ENCODE measurements at regions of chr14 and their contacts with region 1.

Region 1: GRCh38 chr14:39432179-39432618 is at the start of gene FBXO33:
- DNase-seq: peak; percentile 98
- ATAC-seq: peak; percentile 87
- H3K4me3 Mint-ChIP-seq: peak within 1 kb of the TSS; percentile 92
- H3K27ac Mint-ChIP-seq: peak within 1 kb of the TSS; percentile 100
- H3K4me1 Mint-ChIP-seq: peaks cover 37% of the 10 kb centered on the region
- H3K27me3 Mint-ChIP-seq: no peaks in the 10 kb centered on the region
- total RNA-seq, gene FBXO33: 12.5 to 14.0 TPM

Region 2: GRCh38 chr14:38762426-38762825 is 669.8 kb before region 1 on chr14:
- CTCF ChIA-PET with region 1: no interaction called
- POLR2A ChIA-PET with region 1: no interaction called
- intact Hi-C with region 1: no loop called
- DNase-seq: no peak
- ATAC-seq: no peak
- H3K4me3 Mint-ChIP-seq: no peak overlapping the region
- H3K27ac Mint-ChIP-seq: no peak overlapping the region
- H3K4me1 Mint-ChIP-seq: no peaks in the 10 kb centered on the region
- H3K27me3 Mint-ChIP-seq: no peaks in the 10 kb centered on the region

Region 3: DNA sequence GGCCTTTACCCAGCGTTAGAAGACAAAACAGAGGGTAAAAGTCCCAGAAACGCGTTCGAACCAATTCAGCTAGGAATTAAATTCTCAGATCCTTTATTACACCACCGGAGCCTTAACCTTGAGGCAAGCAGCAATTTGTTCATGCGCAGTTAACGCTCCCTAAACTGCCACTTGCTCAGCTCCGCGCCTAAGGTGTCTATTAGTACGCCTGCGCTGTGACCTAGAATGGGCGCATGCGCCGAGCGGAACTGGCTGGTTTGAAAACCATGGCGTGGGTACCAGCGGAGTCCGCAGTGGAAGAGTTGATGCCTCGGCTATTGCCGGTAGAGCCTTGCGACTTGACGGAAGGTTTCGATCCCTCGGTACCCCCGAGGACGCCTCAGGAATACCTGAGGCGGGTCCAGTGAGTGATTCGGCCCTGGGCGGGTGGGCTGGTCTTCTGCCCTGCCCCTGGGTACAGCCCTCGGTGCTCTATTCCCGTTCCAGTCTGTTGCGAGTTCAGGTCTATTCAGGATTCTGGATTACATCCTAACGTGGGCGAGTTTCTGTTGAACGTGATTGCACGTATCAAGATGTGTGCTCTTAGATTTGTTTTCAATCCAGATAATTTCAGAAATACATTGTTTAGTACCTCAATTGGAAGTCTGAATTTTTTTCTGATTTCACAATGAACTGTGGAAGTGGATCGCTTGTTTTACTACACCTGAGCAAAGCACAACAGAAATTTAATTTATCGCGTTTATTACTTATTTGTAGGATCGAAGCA is 317.9 kb before region 1 on chr14 and contains the start of gene GEMIN2:
- CTCF ChIA-PET with region 1: interaction called, 4 read pairs
- POLR2A ChIA-PET with region 1: interaction called, 5 read pairs
- intact Hi-C with region 1: loop called in 1 of 2 experiments (anchors 1 kb)
- DNase-seq: peak; percentile 97
- ATAC-seq: peak; percentile 99
- H3K4me3 Mint-ChIP-seq: peak within 1 kb of the TSS; percentile 95
- H3K27ac Mint-ChIP-seq: peak within 1 kb of the TSS; percentile 94
- H3K4me1 Mint-ChIP-seq: peaks cover 19% of the 10 kb centered on the region
- H3K27me3 Mint-ChIP-seq: no peaks in the 10 kb centered on the region
- total RNA-seq, gene GEMIN2: 23.8 to 27.6 TPM

Region 4: DNA sequence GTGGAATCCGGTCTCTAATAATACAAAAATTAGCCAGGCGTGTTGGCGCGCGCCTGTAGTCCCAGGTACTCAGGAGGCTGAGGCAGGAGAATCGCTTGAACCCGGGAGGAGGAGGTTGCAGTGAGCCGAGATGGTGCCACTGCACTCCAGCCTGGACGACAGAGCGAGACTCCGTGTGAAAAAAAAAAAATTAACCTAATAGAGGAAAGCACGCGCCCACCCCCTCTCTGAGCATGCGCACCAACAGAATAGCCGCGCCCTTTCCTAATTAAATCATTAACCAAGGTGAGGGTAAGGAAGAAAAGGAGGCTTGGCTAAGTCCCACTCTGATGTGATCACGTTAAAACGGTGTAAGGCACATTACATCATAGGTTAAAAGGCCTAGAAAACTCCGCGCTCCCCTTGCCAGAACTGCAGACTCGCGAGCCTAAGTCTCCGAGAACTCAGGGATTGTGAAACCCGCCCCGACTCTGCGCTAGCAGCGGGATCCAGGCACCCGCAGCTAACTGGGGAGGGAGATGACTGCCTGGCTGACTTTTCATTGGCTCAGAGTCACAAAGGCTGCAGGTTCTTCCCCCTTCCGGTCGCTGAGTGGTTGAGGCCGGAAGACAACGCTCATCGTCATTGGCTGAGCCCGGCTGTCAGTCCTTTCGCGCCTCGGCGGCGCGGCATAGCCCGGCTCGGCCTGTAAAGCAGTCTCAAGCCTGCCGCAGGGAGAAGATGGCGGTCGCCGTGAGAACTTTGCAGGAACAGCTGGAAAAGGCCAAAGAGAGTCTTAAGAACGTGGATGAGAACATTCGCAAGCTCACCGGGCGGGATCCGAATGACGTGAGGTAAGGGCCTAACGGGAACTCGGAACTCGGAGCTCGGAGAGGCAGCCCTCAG is 257.4 kb before region 1 on chr14 and contains the start of gene PNN:
- CTCF ChIA-PET with region 1: interaction called, 3 read pairs
- POLR2A ChIA-PET with region 1: interaction called, 18 read pairs
- intact Hi-C with region 1: loop called (anchors 1 to 2 kb)
- DNase-seq: peak; percentile 97
- ATAC-seq: peak; percentile 91
- H3K4me3 Mint-ChIP-seq: peak within 1 kb of the TSS; percentile 96
- H3K27ac Mint-ChIP-seq: peak within 1 kb of the TSS; percentile 99
- H3K4me1 Mint-ChIP-seq: peaks cover 40% of the 10 kb centered on the region
- H3K27me3 Mint-ChIP-seq: no peaks in the 10 kb centered on the region
- total RNA-seq, gene PNN: 87.8 to 98.3 TPM

Region 5: GRCh38 chr14:39266871-39267591 is 165.2 kb before region 1 on chr14:
- CTCF ChIA-PET with region 1: no interaction called
- POLR2A ChIA-PET with region 1: no interaction called
- intact Hi-C with region 1: loop called (anchors 1 to 2 kb)
- DNase-seq: peak; percentile 77
- ATAC-seq: peak; percentile 63
- H3K4me3 Mint-ChIP-seq: peak overlapping the region; percentile 73
- H3K27ac Mint-ChIP-seq: peak overlapping the region; percentile 95
- H3K4me1 Mint-ChIP-seq: peaks cover 50% of the 10 kb centered on the region
- H3K27me3 Mint-ChIP-seq: no peaks in the 10 kb centered on the region

Region 6: DNA sequence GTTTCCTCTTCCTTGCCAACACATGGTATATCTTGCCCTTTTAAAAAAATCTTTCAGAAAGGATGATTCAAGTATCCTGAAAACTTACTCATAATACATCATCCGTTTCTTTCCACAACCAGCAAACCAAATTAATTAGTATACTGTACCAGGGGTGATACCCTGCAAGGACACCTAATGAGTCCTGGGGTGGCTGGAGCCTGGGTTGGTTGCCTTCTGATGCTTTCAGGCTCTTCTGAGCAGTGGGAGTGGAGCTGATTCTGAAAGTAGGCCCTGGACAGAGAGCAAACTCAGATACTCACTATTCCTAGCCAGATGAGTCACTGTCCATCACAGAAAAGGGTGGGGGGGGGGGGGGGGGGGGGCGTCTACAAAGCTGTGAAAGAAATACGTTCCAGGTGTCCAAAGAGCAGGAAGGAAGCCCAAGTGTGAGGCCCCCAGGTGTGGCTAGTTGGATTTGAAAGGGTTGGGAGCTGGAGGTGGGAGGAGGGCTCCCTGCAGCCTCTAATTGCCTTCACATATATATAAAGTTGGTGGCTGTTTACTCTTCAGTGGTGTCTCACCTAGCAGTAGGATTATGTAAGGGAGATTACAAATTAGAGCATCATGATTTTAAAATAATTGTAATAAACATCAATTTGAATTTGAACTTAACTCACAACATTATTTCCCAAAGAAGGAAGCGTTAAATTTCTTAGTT is 36.5 kb before region 1 on chr14:
- CTCF ChIA-PET with region 1: interaction called, 4 read pairs
- POLR2A ChIA-PET with region 1: interaction called, 17 read pairs
- intact Hi-C with region 1: loop called in 1 of 2 experiments (anchors 5 kb)
- DNase-seq: peak; percentile 20
- ATAC-seq: peak; percentile 85
- H3K4me3 Mint-ChIP-seq: no peak overlapping the region
- H3K27ac Mint-ChIP-seq: peak overlapping the region; percentile 84
- H3K4me1 Mint-ChIP-seq: peaks cover 13% of the 10 kb centered on the region
- H3K27me3 Mint-ChIP-seq: no peaks in the 10 kb centered on the region